ENCODE measurements at regions of chr1 and their contacts with region 1.

Region 1: GRCh38 chr1:218345673-218346390 is 696 bp downstream of the TGFB2 start:
- DNase-seq: peak; percentile 75
- H3K4me3 ChIP-seq: peak overlapping the region; percentile 77 to 92 (median 81)
- H3K27ac ChIP-seq: peak overlapping the region; percentile 88
- H3K4me1 ChIP-seq: peaks cover 7% of the 10 kb centered on the region
- H3K27me3 ChIP-seq: no peaks in the 10 kb centered on the region
- CTCF ChIP-seq: peak in 1 of 2 donors; percentile 1

Region 2: DNA sequence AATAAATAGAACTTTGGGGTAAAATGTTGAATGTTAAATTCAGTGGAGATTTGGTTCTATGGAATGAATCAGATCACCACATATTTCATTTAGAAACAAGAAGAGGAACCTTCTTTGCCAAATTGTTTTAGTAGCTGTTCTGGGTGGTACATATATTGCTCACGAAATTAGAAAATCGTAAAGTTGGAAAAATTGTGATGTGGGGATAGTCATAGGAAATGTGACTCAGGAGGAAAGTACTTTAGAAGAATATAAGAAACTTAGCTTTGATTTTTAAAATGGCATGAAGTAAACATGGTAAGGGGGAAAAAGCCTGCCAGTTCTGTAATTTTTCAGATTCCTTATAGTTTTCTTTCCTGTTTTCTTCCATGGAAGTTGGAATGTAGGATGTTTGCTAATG is 33.3 kb before region 1 on chr1:
- CTCF ChIA-PET with region 1: no interaction called
- dilution Hi-C with region 1: no loop called
- in situ Hi-C with region 1: no loop called
- intact Hi-C with region 1: no loop called
- DNase-seq: no peak
- H3K4me3 ChIP-seq: no peak overlapping the region
- H3K27ac ChIP-seq: no peak overlapping the region
- H3K4me1 ChIP-seq: no peaks in the 10 kb centered on the region
- H3K27me3 ChIP-seq: no peaks in the 10 kb centered on the region
- CTCF ChIP-seq: no peak

Region 3: DNA sequence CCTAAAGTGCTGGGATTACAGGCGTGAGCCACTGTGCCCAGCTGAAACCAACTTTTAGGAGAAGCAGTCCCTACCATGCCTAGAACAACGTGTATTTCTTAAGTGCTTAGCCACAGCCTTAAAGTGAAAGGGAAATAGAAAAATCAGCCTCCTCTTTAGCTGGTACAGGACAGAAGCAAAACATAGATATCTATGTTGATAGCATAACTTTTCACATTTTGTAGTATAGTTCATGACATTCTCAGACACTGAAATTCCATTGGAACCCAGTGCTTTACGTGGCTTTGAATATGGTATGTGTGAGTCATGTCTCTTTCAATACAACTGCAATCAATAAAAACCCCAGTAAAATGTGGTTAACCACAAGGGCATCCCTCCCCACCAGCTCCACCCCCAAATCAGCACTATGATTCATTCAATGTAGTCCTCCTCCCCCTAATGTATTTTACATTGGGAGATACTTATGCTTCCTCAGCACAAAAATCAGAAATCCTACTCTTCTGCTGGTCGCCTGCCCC is 31.4 kb after region 1 on chr1:
- CTCF ChIA-PET with region 1: no interaction called
- dilution Hi-C with region 1: no loop called
- in situ Hi-C with region 1: no loop called
- intact Hi-C with region 1: loop called (anchors 2 kb)
- DNase-seq: peak; percentile 95
- H3K4me3 ChIP-seq: no peak overlapping the region
- H3K27ac ChIP-seq: peak overlapping the region; percentile 46
- H3K4me1 ChIP-seq: peaks cover 73% of the 10 kb centered on the region
- H3K27me3 ChIP-seq: no peaks in the 10 kb centered on the region
- CTCF ChIP-seq: no peak

Region 4: GRCh38 chr1:218510153-218510772 is 164.4 kb after region 1 on chr1:
- CTCF ChIA-PET with region 1: no interaction called
- dilution Hi-C with region 1: no loop called
- in situ Hi-C with region 1: loop called (anchors 10 to 25 kb)
- intact Hi-C with region 1: no loop called
- DNase-seq: no peak
- H3K4me3 ChIP-seq: no peak overlapping the region
- H3K27ac ChIP-seq: no peak overlapping the region
- H3K4me1 ChIP-seq: no peaks in the 10 kb centered on the region
- H3K27me3 ChIP-seq: no peaks in the 10 kb centered on the region
- CTCF ChIP-seq: no peak

Region 5: GRCh38 chr1:218679988-218680748 is 334.3 kb after region 1 on chr1:
- CTCF ChIA-PET with region 1: no interaction called
- dilution Hi-C with region 1: no loop called
- in situ Hi-C with region 1: no loop called
- intact Hi-C with region 1: loop called (anchors 2 kb)
- DNase-seq: peak; percentile 63
- H3K4me3 ChIP-seq: no peak overlapping the region
- H3K27ac ChIP-seq: peak overlapping the region; percentile 76
- H3K4me1 ChIP-seq: peaks cover 47% of the 10 kb centered on the region
- H3K27me3 ChIP-seq: no peaks in the 10 kb centered on the region
- CTCF ChIP-seq: no peak

Region 6: DNA sequence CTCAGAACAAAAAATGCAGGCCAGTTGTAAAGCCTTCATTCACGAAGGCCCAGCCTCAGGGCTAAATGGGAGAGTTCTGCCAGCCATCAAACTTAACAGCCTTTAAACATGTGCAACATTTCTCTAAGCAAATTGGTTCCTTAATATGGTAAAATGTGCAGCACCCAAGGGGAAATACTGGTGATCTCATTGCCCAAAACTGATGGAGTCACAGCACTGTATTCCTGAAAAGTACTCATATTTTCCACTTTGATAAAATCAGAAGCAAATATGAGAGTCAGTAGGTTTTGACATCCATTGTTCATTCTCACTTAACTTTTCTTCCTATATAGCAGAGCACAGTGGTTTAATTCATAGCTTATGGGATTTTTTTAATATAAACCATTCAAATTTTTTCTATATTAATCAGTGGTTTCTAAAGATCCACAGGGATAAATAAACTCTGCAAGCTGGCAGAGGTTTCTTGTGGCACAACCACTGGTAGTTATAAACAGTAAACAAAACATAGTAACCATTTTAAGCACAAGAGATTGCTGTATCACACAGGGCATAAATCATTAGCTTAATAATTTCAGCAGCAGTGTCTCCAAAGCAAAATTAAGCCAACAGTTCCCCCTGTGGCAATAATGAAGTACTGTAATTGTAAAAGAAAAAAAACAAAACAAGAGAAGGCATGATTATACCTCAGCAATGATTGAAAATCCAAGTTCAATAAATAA is 721.0 kb after region 1 on chr1:
- CTCF ChIA-PET with region 1: interaction called, 3 read pairs
- dilution Hi-C with region 1: no loop called
- in situ Hi-C with region 1: loop called (anchors 10 to 25 kb)
- intact Hi-C with region 1: loop called (anchors 1 kb)
- DNase-seq: peak; percentile 62
- H3K4me3 ChIP-seq: no peak overlapping the region
- H3K27ac ChIP-seq: peak overlapping the region; percentile 65
- H3K4me1 ChIP-seq: peaks cover 14% of the 10 kb centered on the region
- H3K27me3 ChIP-seq: no peaks in the 10 kb centered on the region
- CTCF ChIP-seq: peak; percentile 66 to 70

Region 7: GRCh38 chr1:219812491-219813203 is 1466.8 kb after region 1 on chr1:
- CTCF ChIA-PET with region 1: no interaction called
- dilution Hi-C with region 1: no loop called
- in situ Hi-C with region 1: loop called (anchors 25 kb)
- intact Hi-C with region 1: no loop called
- DNase-seq: peak; percentile 63
- H3K4me3 ChIP-seq: no peak overlapping the region
- H3K27ac ChIP-seq: no peak overlapping the region
- H3K4me1 ChIP-seq: no peaks in the 10 kb centered on the region
- H3K27me3 ChIP-seq: peaks cover 21% of the 10 kb centered on the region
- CTCF ChIP-seq: peak; percentile 87 to 94